ENCODE measurements at regions of chr15 and their contacts with region 1.

Region 1: GRCh38 chr15:43903864-43904290 is 77.1 kb downstream of the WDR76 start:
- DNase-seq: peak; percentile 48
- H3K4me3 ChIP-seq: no peak overlapping the region
- H3K27ac ChIP-seq: no peak overlapping the region
- H3K4me1 ChIP-seq: no peaks in the 10 kb centered on the region
- H3K27me3 ChIP-seq: peaks cover 3% of the 10 kb centered on the region
- CTCF ChIP-seq: peak; percentile 78 to 84 (median 84)
- EP300 ChIP-seq: no peak
- POLR2A ChIP-seq: no peak

Region 2: DNA sequence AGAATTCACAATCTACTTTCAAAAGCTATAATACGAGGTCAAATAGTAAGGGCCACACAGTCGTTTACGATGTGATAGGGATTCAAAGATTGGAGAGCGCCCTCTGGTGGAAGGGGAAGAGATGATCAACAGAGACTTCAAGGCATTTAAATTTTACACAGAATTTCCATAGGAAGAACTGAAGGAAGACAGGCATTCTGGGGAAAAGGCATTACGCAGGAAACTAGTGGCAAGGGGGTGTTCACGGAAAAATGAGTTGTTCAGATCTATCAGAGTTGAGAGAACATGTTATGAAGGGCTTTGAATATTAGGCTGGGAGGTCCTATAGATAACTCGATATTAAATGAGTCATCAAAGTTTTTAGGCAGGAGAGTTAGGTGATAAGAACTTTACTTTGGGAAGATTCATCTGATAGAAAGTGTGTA is 162.5 kb after region 1 on chr15:
- in situ Hi-C with region 1: loop called in 3 of 4 experiments (anchors 10 kb)
- intact Hi-C with region 1: loop called (anchors 2 kb)
- DNase-seq: peak; percentile 65
- H3K4me3 ChIP-seq: no peak overlapping the region
- H3K27ac ChIP-seq: no peak overlapping the region
- H3K4me1 ChIP-seq: no peaks in the 10 kb centered on the region
- H3K27me3 ChIP-seq: no peaks in the 10 kb centered on the region
- CTCF ChIP-seq: peak; percentile 69 to 77 (median 75)
- EP300 ChIP-seq: no peak
- POLR2A ChIP-seq: no peak

Region 3: DNA sequence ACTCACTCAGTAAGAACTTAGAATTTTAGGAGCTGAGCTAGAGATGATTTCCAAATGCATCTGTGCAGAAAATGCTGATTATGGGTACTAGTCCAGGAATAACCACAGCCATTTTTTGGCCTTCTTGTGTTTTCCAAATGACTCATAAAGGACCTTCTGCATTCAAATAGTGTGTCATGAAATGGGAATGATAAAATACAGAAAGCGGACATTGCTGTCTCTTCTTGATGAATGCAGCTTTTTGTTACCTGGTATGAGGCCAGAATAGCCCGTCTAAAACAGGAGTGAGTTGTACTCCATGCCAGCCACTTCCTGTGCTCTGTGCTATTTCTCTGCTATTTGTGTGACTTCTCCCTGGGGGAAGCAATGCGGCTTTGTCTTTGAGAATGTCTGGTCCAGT is 311.7 kb after region 1 on chr15:
- in situ Hi-C with region 1: loop called in 2 of 4 experiments (anchors 25 kb)
- intact Hi-C with region 1: no loop called
- DNase-seq: no peak
- H3K4me3 ChIP-seq: no peak overlapping the region
- H3K27ac ChIP-seq: no peak overlapping the region
- H3K4me1 ChIP-seq: peaks cover 0 to 2% (median 0%) of the 10 kb centered on the region in 4 donors
- H3K27me3 ChIP-seq: peaks cover 7% of the 10 kb centered on the region
- CTCF ChIP-seq: no peak
- EP300 ChIP-seq: no peak
- POLR2A ChIP-seq: no peak

Measured in transverse colon (tissue), 4 donors.